Ascending aorta (tissue), 2 donors: ENCODE measurements at regions of chr4 and their contacts with region 1.

Region 1: DNA sequence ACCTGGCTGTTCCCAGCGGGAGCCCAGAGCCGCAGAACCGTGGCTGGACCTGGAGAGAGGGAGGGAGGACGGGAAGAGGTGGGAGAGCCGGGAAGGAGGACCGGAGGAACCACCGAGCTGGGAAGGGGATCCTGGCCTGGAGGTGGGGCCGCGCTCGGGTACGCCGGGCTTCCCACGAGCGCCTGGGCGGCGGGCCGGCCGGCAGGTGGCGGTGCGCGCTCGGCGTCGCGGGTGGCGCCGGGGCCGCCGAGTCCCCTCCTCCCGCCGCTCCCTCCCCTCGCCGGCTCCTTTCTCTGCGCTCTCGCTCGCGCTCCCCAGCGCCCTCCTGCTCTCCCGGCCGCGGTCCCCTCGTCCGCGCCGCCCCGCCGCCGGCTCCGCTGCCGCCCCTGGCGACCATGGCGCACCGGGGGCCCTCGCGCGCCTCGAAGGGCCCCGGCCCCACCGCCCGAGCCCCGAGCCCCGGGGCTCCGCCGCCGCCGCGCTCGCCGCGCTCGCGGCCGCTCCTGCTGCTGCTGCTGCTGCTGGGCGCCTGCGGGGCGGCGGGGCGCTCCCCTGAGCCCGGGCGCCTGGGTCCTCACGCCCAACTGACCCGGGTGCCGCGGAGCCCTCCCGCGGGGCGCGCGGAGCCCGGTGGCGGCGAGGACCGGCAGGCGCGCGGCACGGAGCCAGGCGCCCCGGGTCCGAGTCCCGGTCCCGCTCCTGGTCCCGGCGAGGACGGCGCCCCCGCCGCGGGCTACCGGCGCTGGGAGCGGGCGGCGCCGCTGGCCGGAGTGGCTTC is at the start of gene SORCS2:
- DNase-seq: peak in 1 of 2 donors; percentile 67
- H3K4me3 ChIP-seq: peak within 1 kb of the TSS; percentile 44
- H3K27ac ChIP-seq: no peak within 1 kb of the TSS
- H3K4me1 ChIP-seq: peaks cover 6 to 12% of the 10 kb centered on the region in 2 donors
- H3K27me3 ChIP-seq: peaks cover 24% of the 10 kb centered on the region
- CTCF ChIP-seq: peak; percentile 32 to 86 (median 45)
- total RNA-seq, gene SORCS2: 0.32 TPM

Region 2: GRCh38 chr4:6109842-6110719 is 1082.4 kb before region 1 on chr4:
- intact Hi-C with region 1: no loop called
- DNase-seq: no peak
- H3K4me3 ChIP-seq: no peak overlapping the region
- H3K27ac ChIP-seq: no peak overlapping the region
- H3K4me1 ChIP-seq: no peaks in the 10 kb centered on the region
- H3K27me3 ChIP-seq: no peaks in the 10 kb centered on the region
- CTCF ChIP-seq: no peak

Region 3: DNA sequence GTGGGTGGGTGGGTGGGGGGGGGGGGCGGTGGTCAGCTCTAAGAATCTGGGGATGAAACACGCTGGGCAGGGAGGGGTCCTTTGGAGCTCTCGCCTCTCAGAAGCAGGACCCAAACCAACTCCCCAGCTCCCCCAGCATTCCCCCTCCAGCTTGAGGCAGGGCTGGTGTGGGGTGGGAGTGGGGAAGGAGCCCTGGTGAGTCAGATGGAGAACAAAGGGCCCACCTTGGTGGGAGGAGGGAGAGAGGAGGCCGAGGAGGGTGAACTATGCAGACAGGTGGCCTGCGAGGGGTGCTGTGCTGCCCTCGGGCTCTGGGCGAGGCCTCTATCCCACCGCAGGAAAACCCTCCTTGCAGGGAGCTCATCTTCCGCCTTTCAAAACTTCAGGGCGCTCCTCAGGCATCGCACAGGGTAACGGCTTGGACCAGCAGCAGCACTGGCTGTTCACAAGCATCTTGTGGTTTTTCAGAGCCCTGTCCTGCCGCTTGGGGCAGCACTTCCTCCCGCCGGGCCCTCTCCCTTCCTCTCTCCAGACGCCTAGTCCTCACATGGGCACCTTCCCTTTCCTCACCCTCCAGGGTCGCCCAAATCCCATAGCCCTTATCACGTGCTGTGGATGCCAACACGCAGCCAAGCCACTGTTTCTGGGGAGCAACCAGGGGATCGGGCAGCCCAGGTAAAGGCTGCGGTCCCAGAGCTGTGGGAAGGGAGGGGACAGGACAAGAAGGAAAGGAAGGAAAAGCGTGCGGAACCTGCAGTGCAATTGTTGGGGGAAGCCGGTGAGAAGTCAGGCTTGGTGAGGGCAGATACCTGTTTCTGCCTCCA is 90.5 kb before region 1 on chr4:
- intact Hi-C with region 1: loop called (anchors 5 kb)
- DNase-seq: peak in 1 of 2 donors; percentile 83
- H3K4me3 ChIP-seq: peak overlapping the region; percentile 57 to 70
- H3K27ac ChIP-seq: peak overlapping the region; percentile 83 to 84
- H3K4me1 ChIP-seq: peaks cover 5 to 20% of the 10 kb centered on the region in 2 donors
- H3K27me3 ChIP-seq: no peaks in the 10 kb centered on the region
- CTCF ChIP-seq: peak; percentile 41 to 72 (median 69)

Region 4: GRCh38 chr4:7206911-7207567 is 14.6 kb after region 1 on chr4:
- intact Hi-C with region 1: loop called (anchors 2 kb)
- DNase-seq: peak; percentile 51 to 92
- H3K4me3 ChIP-seq: peak overlapping the region in 1 of 2 donors; percentile 15
- H3K27ac ChIP-seq: peak overlapping the region; percentile 70 to 80
- H3K4me1 ChIP-seq: peaks cover 5 to 21% of the 10 kb centered on the region in 2 donors
- H3K27me3 ChIP-seq: no peaks in the 10 kb centered on the region
- CTCF ChIP-seq: no peak

Region 5: DNA sequence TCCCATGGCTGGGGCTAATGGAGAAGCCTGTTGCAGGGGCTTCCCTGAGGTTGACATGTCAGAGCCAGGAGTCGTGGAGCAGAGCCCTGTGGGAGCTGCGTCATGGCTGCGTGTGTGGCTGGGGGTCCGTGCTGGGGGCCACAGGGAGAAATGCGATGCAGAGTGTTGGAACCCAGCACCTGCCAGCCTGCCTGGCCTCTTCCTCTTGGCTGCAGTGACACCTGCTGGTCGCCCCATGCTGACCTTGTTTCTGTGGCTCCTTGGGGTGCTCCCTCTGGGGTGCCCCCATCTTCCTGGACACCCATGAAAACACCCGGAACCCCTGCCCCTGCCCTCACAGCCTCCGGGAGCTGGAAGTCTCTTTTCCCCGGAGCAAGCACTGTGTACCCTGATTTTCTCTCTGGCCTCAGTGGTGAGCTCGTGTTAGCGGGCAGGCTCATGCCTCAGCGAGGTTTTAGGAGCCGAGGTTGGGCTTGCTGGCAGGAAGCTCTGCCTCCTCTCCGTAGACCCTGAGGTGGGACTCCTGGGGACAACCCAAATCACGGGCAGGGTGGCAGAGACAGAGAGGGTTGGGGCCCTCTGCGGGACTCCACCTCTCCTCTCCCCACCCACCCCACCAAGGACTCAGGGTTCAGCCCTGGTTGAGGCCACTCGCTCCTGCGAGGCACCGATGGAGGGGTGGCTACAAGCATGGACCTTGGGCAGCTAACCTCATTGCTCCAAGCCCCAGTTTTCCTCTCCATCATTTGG is 103.6 kb after region 1 on chr4:
- intact Hi-C with region 1: loop called (anchors 1 kb)
- DNase-seq: no peak
- H3K4me3 ChIP-seq: no peak overlapping the region
- H3K27ac ChIP-seq: no peak overlapping the region
- H3K4me1 ChIP-seq: no peaks in the 10 kb centered on the region
- H3K27me3 ChIP-seq: no peaks in the 10 kb centered on the region
- CTCF ChIP-seq: peak; percentile 24 to 64 (median 44)

Region 6: GRCh38 chr4:7335344-7336069 is 143.1 kb after region 1 on chr4:
- intact Hi-C with region 1: loop called (anchors 1 kb)
- DNase-seq: no peak
- H3K4me3 ChIP-seq: no peak overlapping the region
- H3K27ac ChIP-seq: no peak overlapping the region
- H3K4me1 ChIP-seq: peaks cover 0 to 3% of the 10 kb centered on the region in 2 donors
- H3K27me3 ChIP-seq: no peaks in the 10 kb centered on the region
- CTCF ChIP-seq: peak; percentile 10 to 52 (median 48)

Region 7: GRCh38 chr4:7719354-7720174 is 527.1 kb after region 1 on chr4:
- intact Hi-C with region 1: loop called (anchors 1 kb)
- DNase-seq: no peak
- H3K4me3 ChIP-seq: no peak overlapping the region
- H3K27ac ChIP-seq: no peak overlapping the region
- H3K4me1 ChIP-seq: no peaks in the 10 kb centered on the region
- H3K27me3 ChIP-seq: no peaks in the 10 kb centered on the region
- CTCF ChIP-seq: peak; percentile 61 to 79 (median 75)

Region 8: GRCh38 chr4:7964890-7965662 is 772.6 kb after region 1 on chr4:
- intact Hi-C with region 1: no loop called
- DNase-seq: no peak
- H3K4me3 ChIP-seq: no peak overlapping the region
- H3K27ac ChIP-seq: no peak overlapping the region
- H3K4me1 ChIP-seq: peaks cover 4 to 34% of the 10 kb centered on the region in 2 donors
- H3K27me3 ChIP-seq: no peaks in the 10 kb centered on the region
- CTCF ChIP-seq: no peak